Transverse colon (tissue), 4 donors: ENCODE measurements at regions of chr2 and their contacts with region 1.

Region 1: GRCh38 chr2:5339473-5339872 is 352.7 kb upstream of the SOX11 start:
- DNase-seq: no peak
- H3K4me3 ChIP-seq: no peak overlapping the region
- H3K27ac ChIP-seq: no peak overlapping the region
- H3K4me1 ChIP-seq: no peaks in the 10 kb centered on the region
- H3K27me3 ChIP-seq: no peaks in the 10 kb centered on the region
- CTCF ChIP-seq: no peak
- EP300 ChIP-seq: no peak
- POLR2A ChIP-seq: no peak

Region 2: GRCh38 chr2:5227062-5227699 is 112.3 kb before region 1 on chr2:
- in situ Hi-C with region 1: no loop called
- intact Hi-C with region 1: no loop called
- DNase-seq: no peak
- H3K4me3 ChIP-seq: no peak overlapping the region
- H3K27ac ChIP-seq: no peak overlapping the region
- H3K4me1 ChIP-seq: no peaks in the 10 kb centered on the region
- H3K27me3 ChIP-seq: no peaks in the 10 kb centered on the region
- CTCF ChIP-seq: no peak
- EP300 ChIP-seq: no peak
- POLR2A ChIP-seq: no peak

Region 3: DNA sequence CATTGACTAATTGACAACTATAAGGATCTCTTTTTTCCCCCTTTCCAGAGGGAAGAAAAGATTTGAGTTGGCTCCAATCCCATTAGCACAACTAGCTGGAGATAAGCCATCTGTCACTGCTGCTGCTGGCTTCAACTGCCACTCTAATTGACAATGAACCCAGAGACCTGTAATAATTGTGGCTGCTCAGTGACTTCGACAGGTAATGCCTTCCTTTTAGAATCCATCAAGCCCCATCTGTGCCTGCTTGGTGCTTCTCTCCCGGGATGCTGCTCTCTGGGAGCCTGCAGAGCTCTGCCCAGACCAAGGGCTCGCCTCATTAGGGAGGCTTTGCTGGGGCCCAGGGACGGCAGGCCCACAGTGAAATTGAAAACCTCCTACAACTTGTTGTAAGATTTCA is 24.0 kb before region 1 on chr2:
- in situ Hi-C with region 1: no loop called
- intact Hi-C with region 1: no loop called
- DNase-seq: no peak
- H3K4me3 ChIP-seq: no peak overlapping the region
- H3K27ac ChIP-seq: no peak overlapping the region
- H3K4me1 ChIP-seq: no peaks in the 10 kb centered on the region
- H3K27me3 ChIP-seq: no peaks in the 10 kb centered on the region
- CTCF ChIP-seq: no peak
- EP300 ChIP-seq: no peak
- POLR2A ChIP-seq: no peak

Region 4: GRCh38 chr2:5359397-5359796 is 19.9 kb after region 1 on chr2:
- in situ Hi-C with region 1: no loop called
- intact Hi-C with region 1: no loop called
- DNase-seq: no peak
- H3K4me3 ChIP-seq: no peak overlapping the region
- H3K27ac ChIP-seq: no peak overlapping the region
- H3K4me1 ChIP-seq: no peaks in the 10 kb centered on the region
- H3K27me3 ChIP-seq: no peaks in the 10 kb centered on the region
- CTCF ChIP-seq: no peak
- EP300 ChIP-seq: no peak
- POLR2A ChIP-seq: no peak

Region 5: GRCh38 chr2:5539282-5540165 is 200.1 kb after region 1 on chr2:
- in situ Hi-C with region 1: no loop called
- intact Hi-C with region 1: no loop called
- DNase-seq: no peak
- H3K4me3 ChIP-seq: no peak overlapping the region
- H3K27ac ChIP-seq: peak overlapping the region in 3 of 4 donors; percentile 7 to 50 (median 46)
- H3K4me1 ChIP-seq: no peaks in the 10 kb centered on the region
- H3K27me3 ChIP-seq: no peaks in the 10 kb centered on the region
- CTCF ChIP-seq: no peak
- EP300 ChIP-seq: no peak
- POLR2A ChIP-seq: no peak

Region 6: DNA sequence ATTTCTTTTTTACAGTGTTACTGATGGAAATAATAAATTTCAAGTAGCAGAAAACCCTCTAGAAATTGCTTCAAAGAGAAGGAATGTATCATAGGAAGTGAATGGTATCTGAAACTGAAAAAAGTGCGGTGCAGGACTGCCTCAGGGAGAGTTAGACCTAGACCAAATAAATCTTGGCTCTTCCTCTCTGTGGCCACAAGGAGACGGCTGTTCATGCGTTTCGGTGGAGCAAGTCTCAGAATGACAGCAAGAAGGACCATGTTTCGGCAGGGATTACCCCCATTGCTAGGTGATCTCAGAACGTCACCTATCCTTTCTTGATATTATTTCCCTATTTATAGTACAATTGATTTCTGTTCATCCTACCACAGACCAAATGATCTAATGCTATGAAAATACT is 875.0 kb after region 1 on chr2:
- in situ Hi-C with region 1: no loop called
- intact Hi-C with region 1: loop called (anchors 5 kb)
- DNase-seq: no peak
- H3K4me3 ChIP-seq: no peak overlapping the region
- H3K27ac ChIP-seq: no peak overlapping the region
- H3K4me1 ChIP-seq: peaks cover 0 to 5% (median 0%) of the 10 kb centered on the region in 4 donors
- H3K27me3 ChIP-seq: no peaks in the 10 kb centered on the region
- CTCF ChIP-seq: no peak
- EP300 ChIP-seq: no peak
- POLR2A ChIP-seq: no peak